A673 (cell line): ENCODE measurements at regions of chr2 and their contacts with region 1.

Region 1: DNA sequence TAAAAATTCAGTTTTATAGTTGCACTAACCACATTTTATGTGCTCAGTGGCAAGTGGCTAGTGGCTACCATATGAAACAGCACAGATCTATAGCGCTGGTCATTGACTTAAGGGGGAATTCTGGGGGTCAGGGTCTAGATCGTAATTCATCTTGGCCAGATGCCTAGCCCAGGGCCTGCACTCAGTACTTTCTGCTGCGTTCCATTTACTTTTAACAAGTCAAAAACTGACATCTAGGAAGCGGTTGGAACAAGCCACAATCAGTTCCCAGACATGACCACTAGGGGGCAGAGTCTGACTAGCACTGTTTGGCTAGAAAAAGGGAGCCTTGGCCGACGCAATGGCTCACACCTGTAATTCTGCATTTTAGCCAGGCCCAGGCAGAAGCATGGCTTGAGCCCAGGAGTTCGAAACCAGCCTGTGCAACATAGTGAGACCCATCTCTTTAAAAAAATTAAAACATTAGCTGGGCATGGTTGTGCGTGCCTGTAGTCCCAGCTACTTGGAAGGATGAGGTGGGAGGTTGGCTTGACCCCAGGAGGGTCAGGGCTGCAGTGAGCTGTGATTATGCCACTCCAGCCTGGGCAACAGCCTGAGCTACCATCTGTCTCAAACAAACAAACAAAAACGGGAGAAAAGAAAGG is 9.0 kb upstream of the TMBIM1 start:
- DNase-seq: peak; percentile 87
- H3K4me3 ChIP-seq: no peak overlapping the region
- H3K27ac ChIP-seq: no peak overlapping the region
- H3K4me1 ChIP-seq: no peaks in the 10 kb centered on the region
- H3K27me3 ChIP-seq: no peaks in the 10 kb centered on the region
- CTCF ChIP-seq: peak; percentile 90

Region 2: DNA sequence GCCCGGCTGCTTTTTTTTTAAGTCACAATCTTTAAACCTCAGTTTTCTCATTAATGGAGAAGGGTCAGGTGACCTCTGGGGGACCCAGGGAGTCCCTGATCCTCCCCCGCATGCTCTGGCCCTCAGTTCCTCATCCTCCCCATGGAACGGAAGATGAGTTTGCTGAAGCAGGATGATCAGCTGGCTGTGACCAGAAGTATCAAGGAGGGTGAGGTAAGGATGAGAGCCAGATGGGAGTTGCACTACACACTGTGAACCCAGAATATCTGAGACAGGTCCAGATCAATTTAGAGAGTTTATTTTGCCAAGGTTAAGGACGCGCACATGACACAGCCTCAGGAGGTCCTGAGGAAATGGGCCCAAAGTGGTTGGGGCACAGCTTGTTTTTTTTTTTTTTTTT is 59.1 kb after region 1 on chr2:
- CTCF ChIA-PET with region 1: interaction called, 3 read pairs
- POLR2A ChIA-PET with region 1: no interaction called
- intact Hi-C with region 1: loop called (anchors 1 kb)
- DNase-seq: no peak
- H3K4me3 ChIP-seq: no peak overlapping the region
- H3K27ac ChIP-seq: no peak overlapping the region
- H3K4me1 ChIP-seq: no peaks in the 10 kb centered on the region
- H3K27me3 ChIP-seq: no peaks in the 10 kb centered on the region
- CTCF ChIP-seq: no peak

Region 3: DNA sequence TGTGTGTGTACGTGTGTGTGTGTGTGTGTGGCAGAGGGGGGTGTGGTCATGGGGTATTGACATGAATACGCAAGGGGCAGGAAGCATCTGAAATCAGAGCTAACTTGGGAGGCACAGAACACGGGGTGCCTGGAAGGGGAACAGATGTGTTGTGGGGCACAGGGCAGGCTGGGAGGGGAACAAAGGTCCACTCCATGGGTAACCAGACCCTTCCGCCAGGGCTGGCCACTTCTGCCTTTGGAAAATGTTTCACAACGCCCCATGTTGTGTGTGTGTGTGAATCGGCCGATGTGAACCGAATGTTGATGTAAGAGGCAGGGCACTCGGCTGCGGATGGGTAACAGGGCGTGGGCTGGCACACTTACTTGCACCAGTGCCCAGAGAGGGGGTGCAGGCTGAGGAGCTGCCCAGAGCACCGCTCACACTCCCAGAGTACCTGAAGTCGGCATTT is 80.6 kb after region 1 on chr2 and contains the start of gene SLC11A1:
- CTCF ChIA-PET with region 1: no interaction called
- POLR2A ChIA-PET with region 1: no interaction called
- intact Hi-C with region 1: no loop called
- DNase-seq: no peak
- H3K4me3 ChIP-seq: no peak within 1 kb of the TSS
- H3K27ac ChIP-seq: no peak within 1 kb of the TSS
- H3K4me1 ChIP-seq: no peaks in the 10 kb centered on the region
- H3K27me3 ChIP-seq: no peaks in the 10 kb centered on the region
- CTCF ChIP-seq: no peak
- total RNA-seq, gene SLC11A1: 0.09 TPM in 1 of 2 replicates, not detected in the other

Region 4: DNA sequence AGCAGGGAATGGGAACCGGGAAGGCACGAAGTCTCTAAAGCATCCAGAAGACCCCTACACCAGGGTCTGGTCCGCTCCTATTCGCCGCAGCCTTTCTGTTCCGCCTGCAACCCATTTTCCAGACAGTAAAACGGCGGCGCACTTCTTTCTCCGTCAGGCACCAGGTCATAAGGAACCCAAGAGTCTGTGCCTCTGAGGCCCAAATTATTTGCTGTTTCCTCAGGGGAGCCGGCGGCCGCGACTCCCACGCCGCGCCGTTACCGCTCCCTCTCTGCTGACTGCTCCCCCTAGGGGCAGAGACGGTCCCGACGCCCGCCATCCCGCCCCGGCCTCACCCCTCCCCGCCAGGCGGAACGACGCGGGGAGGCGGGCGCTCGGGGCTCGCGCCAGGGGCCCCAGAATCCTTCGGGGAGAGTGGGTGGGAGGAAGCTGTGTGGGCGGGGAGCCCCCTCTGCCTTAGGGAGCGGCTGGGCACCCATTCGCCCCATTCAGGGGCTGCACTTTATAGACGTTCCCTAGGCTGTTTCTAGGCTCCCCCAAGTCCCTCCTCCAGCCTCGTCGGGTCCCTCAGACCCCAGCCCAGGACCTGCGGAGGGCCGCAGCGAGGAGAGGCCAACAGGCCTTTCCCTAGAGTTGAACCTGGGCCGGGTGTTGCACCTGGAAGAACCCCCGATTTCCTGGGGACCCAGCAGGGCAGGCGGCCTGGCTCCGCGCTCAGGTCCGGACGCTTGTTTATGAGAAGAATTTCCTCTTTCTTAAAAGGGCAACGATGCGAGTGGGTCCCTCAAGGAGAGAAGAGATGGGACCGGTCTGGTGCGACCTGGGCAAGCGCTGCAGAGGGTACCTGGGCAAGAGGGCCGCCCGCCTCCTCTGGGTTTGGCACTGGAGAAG is 94.7 kb after region 1 on chr2:
- CTCF ChIA-PET with region 1: interaction called, 5 read pairs
- POLR2A ChIA-PET with region 1: no interaction called
- intact Hi-C with region 1: loop called (anchors 2 kb)
- DNase-seq: peak; percentile 98
- H3K4me3 ChIP-seq: peak overlapping the region; percentile 97
- H3K27ac ChIP-seq: peak overlapping the region; percentile 91
- H3K4me1 ChIP-seq: peaks cover 37% of the 10 kb centered on the region
- H3K27me3 ChIP-seq: no peaks in the 10 kb centered on the region
- CTCF ChIP-seq: peak; percentile 87

Region 5: DNA sequence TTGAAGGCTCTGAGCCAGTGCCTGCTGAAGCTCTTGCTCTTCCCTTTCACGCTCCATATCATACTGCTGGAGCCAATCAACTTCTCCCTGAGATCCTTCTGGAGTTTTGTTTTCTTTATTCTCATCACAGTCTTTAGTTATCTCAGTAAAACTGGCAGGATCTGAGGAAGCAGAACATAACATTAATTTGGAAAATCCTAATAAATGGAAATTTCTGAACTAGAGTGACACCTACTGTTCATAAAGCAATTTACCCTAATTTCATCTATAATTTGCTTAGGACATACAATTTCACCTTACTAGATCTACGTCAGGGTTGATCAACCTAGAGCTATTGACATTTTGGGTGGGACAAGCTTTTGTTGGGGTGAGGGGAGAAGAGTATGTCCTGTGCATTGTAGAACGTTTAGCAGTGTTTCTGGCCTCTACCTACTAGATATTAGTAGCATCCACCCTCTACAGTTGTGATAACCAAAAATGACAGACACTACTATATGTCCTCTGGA is 164.8 kb after region 1 on chr2:
- CTCF ChIA-PET with region 1: no interaction called
- POLR2A ChIA-PET with region 1: no interaction called
- intact Hi-C with region 1: loop called (anchors 2 kb)
- DNase-seq: peak; percentile 40
- H3K4me3 ChIP-seq: no peak overlapping the region
- H3K27ac ChIP-seq: no peak overlapping the region
- H3K4me1 ChIP-seq: no peaks in the 10 kb centered on the region
- H3K27me3 ChIP-seq: no peaks in the 10 kb centered on the region
- CTCF ChIP-seq: peak; percentile 68

Region 6: GRCh38 chr2:218691234-218691633 is 389.9 kb after region 1 on chr2:
- CTCF ChIA-PET with region 1: no interaction called
- POLR2A ChIA-PET with region 1: no interaction called
- intact Hi-C with region 1: loop called (anchors 5 kb)
- DNase-seq: no peak
- H3K4me3 ChIP-seq: no peak overlapping the region
- H3K27ac ChIP-seq: no peak overlapping the region
- H3K4me1 ChIP-seq: no peaks in the 10 kb centered on the region
- H3K27me3 ChIP-seq: no peaks in the 10 kb centered on the region
- CTCF ChIP-seq: no peak